ENCODE measurements at regions of chr6 and their contacts with region 1.

Region 1: GRCh38 chr6:53171605-53172446 is 23.2 kb upstream of the GCM1 start:
- ATAC-seq: peak; percentile 72 to 91 (median 88)
- H3K4me3 ChIP-seq: no peak overlapping the region
- H3K27ac ChIP-seq: no peak overlapping the region
- H3K4me1 ChIP-seq: peaks cover 0 to 7% of the 10 kb centered on the region in 2 donors

Region 2: GRCh38 chr6:53437557-53438202 is 265.9 kb after region 1 on chr6:
- in situ Hi-C with region 1: loop called in 3 of 9 experiments (anchors 25 kb)
- ATAC-seq: peak in 7 of 8 experiments; percentile 25 to 94 (median 76)
- H3K4me3 ChIP-seq: no peak overlapping the region
- H3K27ac ChIP-seq: no peak overlapping the region
- H3K4me1 ChIP-seq: peaks cover 9 to 12% of the 10 kb centered on the region in 2 donors

Region 3: DNA sequence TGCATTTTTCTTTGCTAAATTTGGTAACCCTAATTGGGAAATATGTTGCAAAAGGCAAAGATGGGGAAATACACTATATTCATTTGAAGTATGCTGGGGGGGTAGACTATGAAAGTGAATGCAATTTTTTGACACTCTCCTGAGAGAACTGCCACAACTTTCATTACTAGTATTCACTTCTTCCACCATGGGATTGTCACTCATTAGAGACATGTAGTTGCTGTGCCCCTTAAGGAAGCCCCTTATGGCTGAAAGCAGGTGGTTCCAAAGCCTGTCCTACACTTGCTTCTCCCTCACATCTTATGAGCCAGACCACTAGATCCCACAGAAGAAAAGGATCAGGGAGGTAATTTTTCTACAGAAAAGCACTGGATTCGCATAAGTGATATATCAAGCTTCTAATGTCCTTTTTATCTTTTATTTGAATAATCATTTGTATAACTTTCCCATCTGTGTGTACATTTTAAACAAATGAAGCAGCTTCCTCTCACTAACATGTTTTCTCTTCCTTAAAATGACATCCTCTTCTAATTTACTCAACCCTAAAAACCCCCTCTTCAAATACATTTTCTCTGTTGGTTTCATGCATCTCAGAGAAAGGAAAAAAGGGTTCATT is 289.3 kb after region 1 on chr6:
- in situ Hi-C with region 1: loop called in 3 of 9 experiments (anchors 25 kb)
- ATAC-seq: no peak
- H3K4me3 ChIP-seq: no peak overlapping the region
- H3K27ac ChIP-seq: no peak overlapping the region
- H3K4me1 ChIP-seq: peaks cover 0 to 3% of the 10 kb centered on the region in 2 donors

Region 4: GRCh38 chr6:53484476-53485280 is 312.9 kb after region 1 on chr6:
- in situ Hi-C with region 1: loop called in 5 of 9 experiments (anchors 5 to 25 kb)
- ATAC-seq: peak in 6 of 8 experiments; percentile 26 to 64 (median 38)
- H3K4me3 ChIP-seq: no peak overlapping the region
- H3K27ac ChIP-seq: no peak overlapping the region
- H3K4me1 ChIP-seq: no peaks in the 10 kb centered on the region

Region 5: DNA sequence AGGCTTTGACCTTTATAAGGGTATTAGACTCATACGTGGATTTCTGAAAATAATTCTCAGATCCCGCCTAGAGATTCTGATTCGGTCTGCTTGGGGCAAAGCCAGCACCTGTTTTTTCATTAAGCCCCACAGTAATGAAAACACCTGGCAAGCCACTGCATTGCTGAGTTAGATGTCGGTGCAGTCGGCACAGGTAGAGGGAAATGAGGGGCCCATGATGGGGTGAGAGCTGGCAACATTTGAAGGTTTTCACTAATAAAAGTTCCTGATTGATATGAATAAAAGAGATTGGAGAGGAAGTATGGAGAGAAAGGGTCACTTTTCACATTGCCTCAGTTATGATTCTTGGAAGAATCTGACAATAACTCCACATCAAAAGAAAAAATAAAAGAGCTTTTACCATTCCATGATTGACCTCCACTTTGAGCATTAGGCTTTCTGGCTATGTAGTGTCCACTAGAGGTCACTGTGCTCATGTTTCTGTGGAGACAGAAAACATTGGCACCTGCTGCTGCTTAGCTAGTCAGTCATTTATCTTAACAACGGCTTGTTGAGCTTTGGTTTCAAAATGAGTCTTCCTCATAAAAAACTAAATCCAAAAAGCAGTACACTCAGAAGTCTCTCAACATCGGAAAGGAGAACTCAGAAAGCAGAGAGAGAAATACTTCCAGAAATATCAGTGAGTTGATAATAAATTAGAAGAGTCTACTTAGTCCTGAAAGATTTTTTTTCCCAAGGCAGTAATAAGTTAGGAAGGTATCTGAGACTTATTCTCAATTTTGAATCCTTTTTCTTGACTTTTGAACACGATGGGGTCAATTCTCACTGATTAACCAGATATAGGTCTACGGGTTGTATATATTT is 547.0 kb after region 1 on chr6:
- in situ Hi-C with region 1: loop called in 1 of 9 experiments (anchors 25 kb)
- ATAC-seq: peak; percentile 55 to 84 (median 64)
- H3K4me3 ChIP-seq: no peak overlapping the region
- H3K27ac ChIP-seq: no peak overlapping the region
- H3K4me1 ChIP-seq: no peaks in the 10 kb centered on the region